ENCODE measurements at regions of chr15 and their contacts with region 1.

Region 1: GRCh38 chr15:64067564-64068030 is 21.3 kb upstream of the DAPK2 start:
- DNase-seq: peak; percentile 31 to 82 (median 72)
- ATAC-seq: peak; percentile 90
- H3K4me3 Mint-ChIP-seq: no peak overlapping the region
- H3K27ac Mint-ChIP-seq: peak overlapping the region in 4 of 10 donors; percentile 56 to 71 (median 68)
- H3K4me1 Mint-ChIP-seq: peaks cover 6 to 13% (median 8%) of the 10 kb centered on the region in 4 donors
- H3K27me3 Mint-ChIP-seq: no peaks in the 10 kb centered on the region

Region 2: DNA sequence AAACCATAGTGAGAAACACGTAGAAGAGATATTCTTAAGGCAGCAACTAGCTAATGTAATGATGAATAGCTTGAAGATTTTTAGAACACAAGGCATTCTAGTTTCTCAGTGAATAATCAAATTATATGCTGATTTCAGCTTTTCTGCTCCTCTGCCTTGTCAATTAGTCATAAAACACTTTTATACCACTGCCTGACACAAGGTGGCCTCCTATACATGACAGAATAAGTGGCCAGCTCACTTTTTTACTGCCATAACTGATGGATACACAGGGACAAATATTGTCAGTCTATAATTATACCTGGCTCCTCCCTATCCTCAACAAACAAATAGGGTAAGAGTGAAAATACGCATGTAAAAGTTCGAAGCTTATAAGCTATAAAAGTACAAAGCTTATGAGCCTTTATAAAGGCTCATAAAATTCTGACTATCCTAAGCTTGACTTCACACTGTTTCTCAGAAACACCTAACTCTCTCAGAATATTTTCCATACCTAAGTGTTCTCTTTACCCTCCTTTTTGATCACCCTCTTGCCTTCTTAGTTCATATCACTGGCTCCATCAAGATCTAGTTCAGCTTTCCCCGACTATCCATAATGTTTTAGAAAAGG is 315.4 kb before region 1 on chr15:
- POLR2A ChIA-PET with region 1: interaction called, 12 read pairs
- DNase-seq: peak in 8 of 10 donors; percentile 24 to 71 (median 53)
- ATAC-seq: peak; percentile 66 to 67
- H3K4me3 Mint-ChIP-seq: no peak overlapping the region
- H3K27ac Mint-ChIP-seq: peak overlapping the region in 7 of 10 donors; percentile 2 to 81 (median 35)
- H3K4me1 Mint-ChIP-seq: peaks cover 0 to 10% (median 3%) of the 10 kb centered on the region in 4 donors
- H3K27me3 Mint-ChIP-seq: no peaks in the 10 kb centered on the region

Region 3: DNA sequence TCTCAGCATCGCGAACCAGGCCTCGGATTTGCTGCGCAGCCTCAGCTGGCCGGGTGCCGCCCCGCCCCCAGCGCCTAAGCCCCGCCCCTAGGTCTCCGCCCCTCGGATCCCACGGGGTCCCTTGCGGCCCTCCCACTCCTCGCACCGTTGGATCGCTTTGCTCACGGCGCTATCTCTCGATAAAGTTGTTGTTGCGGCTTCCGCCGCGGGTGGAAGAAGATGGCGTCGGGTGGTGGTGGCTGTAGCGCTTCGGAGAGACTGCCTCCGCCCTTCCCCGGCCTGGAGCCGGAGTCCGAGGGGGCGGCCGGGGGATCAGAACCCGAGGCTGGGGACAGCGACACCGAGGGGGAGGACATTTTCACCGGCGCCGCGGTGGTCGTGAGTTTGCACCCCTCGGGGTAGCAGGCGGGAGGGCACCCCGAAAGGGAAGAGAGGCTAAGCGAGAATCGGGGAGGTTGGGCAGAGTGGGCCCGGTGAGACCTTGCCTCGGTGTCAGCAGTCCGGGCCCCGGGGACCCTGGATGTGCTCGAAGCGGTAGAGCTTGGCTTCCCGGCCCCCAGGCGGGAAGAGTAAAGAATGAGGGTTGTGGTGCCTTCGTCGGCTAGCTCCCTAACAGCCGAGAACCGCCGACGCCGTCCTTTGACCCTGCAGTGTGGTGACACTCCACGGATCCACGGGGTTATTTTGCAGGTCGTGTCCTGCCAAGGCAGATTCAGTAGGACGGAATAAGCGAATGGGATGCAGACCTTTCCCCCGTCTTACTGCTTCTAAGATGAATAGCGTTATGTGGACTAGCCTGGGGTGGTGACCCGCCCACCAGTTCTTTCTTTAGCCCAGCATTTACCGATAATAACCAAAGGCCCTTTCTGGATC is 28.4 kb after region 1 on chr15 and contains the start of gene SNX1:
- POLR2A ChIA-PET with region 1: no interaction called
- DNase-seq: peak; percentile 92 to 97 (median 94)
- ATAC-seq: peak; percentile 71 to 76
- H3K4me3 Mint-ChIP-seq: peak within 1 kb of the TSS; percentile 93 to 100 (median 97)
- H3K27ac Mint-ChIP-seq: peak within 1 kb of the TSS; percentile 94 to 100 (median 100)
- H3K4me1 Mint-ChIP-seq: peaks cover 33 to 86% (median 83%) of the 10 kb centered on the region in 4 donors
- H3K27me3 Mint-ChIP-seq: no peaks in the 10 kb centered on the region
- polyA plus RNA-seq, gene SNX1: 42.7 to 72.6 (median 54.8) TPM

Region 4: GRCh38 chr15:64455961-64456371 is 388.4 kb after region 1 on chr15:
- POLR2A ChIA-PET with region 1: no interaction called
- DNase-seq: peak in 3 of 10 donors; percentile 13 to 43 (median 35)
- ATAC-seq: peak in 1 of 2 donors; percentile 22
- H3K4me3 Mint-ChIP-seq: peak overlapping the region; percentile 44 to 77 (median 68)
- H3K27ac Mint-ChIP-seq: peak overlapping the region; percentile 63 to 96 (median 92)
- H3K4me1 Mint-ChIP-seq: peaks cover 39 to 70% (median 68%) of the 10 kb centered on the region in 4 donors
- H3K27me3 Mint-ChIP-seq: no peaks in the 10 kb centered on the region